HEK293 (cell line): ENCODE measurements at regions of chr2 and their contacts with region 1.

Region 1: DNA sequence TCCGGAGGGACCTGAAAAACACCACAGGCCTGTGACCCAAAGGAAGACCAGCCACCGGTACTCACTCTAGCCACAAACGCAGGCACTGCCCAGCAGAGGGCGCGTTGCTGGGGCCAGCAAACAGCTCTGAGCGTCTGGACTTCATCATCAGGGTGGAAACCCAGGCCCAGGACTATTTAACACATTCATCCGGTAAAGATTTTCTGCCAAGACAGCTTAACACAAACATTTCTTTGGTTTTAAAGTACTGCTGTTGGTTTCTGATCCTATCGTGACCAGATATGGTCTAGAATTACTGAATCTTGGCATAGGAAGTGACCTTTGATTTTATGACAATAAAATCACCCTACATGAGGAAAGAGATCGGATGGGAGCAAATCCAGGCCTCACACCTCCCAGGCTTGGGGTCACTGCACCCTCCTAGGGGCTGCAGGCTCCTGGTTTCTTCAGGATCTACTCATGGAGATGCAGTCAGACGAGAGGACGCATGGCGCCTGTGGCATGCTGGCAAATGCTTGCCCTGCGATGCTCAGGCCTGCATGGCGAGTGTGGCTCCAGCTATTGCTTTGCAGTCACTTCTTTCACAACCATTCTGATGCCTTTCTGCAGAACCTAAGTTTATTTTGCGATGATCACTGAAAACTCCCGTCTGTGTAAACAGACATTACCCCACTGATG is 130.4 kb downstream of the COL4A4 start:
- H3K4me3 ChIP-seq: no peak overlapping the region
- H3K27ac ChIP-seq: no peak overlapping the region
- H3K4me1 ChIP-seq: no peaks in the 10 kb centered on the region
- CTCF ChIP-seq: peak; percentile 30; the same call in 1 of the 2 replicates

Region 2: GRCh38 chr2:226387499-226387942 is 646.1 kb before region 1 on chr2:
- CTCF ChIA-PET with region 1: no interaction called
- POLR2A ChIA-PET with region 1: no interaction called
- H3K4me3 ChIP-seq: no peak overlapping the region
- H3K27ac ChIP-seq: no peak overlapping the region
- H3K4me1 ChIP-seq: no peaks in the 10 kb centered on the region
- CTCF ChIP-seq: no peak

Region 3: DNA sequence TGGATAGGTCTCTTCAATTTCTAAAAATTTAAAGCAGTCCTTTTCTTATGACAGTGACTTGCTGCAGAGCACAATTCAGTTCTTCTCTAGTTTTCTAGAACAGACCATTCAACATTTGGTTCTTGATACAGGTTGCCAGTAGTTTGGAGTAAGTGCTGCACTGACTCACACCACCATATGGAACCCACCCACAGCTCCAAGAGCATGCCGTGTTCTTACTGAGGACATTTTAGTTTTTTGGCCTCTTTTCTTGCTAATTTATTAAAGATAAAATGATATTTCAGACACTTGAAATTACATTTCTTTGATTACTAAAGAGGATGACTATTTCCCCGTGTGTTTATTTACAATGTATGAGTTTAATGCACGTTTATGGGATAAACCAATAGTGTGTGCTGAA is 10.4 kb after region 1 on chr2:
- CTCF ChIA-PET with region 1: interaction called, 23 read pairs
- POLR2A ChIA-PET with region 1: no interaction called
- H3K4me3 ChIP-seq: no peak overlapping the region
- H3K27ac ChIP-seq: no peak overlapping the region
- H3K4me1 ChIP-seq: no peaks in the 10 kb centered on the region
- CTCF ChIP-seq: no peak

Region 4: GRCh38 chr2:227324995-227325838 is 291.6 kb after region 1 on chr2 and contains the start of gene MFF:
- CTCF ChIA-PET with region 1: no interaction called
- POLR2A ChIA-PET with region 1: no interaction called
- H3K4me3 ChIP-seq: peak within 1 kb of the TSS; percentile 95
- H3K27ac ChIP-seq: peak within 1 kb of the TSS; percentile 78
- H3K4me1 ChIP-seq: peaks cover 4% of the 10 kb centered on the region
- CTCF ChIP-seq: peak; percentile 66